Heart left ventricle (tissue), 16 donors: ENCODE measurements at regions of chr19 and their contacts with region 1.

Region 1: DNA sequence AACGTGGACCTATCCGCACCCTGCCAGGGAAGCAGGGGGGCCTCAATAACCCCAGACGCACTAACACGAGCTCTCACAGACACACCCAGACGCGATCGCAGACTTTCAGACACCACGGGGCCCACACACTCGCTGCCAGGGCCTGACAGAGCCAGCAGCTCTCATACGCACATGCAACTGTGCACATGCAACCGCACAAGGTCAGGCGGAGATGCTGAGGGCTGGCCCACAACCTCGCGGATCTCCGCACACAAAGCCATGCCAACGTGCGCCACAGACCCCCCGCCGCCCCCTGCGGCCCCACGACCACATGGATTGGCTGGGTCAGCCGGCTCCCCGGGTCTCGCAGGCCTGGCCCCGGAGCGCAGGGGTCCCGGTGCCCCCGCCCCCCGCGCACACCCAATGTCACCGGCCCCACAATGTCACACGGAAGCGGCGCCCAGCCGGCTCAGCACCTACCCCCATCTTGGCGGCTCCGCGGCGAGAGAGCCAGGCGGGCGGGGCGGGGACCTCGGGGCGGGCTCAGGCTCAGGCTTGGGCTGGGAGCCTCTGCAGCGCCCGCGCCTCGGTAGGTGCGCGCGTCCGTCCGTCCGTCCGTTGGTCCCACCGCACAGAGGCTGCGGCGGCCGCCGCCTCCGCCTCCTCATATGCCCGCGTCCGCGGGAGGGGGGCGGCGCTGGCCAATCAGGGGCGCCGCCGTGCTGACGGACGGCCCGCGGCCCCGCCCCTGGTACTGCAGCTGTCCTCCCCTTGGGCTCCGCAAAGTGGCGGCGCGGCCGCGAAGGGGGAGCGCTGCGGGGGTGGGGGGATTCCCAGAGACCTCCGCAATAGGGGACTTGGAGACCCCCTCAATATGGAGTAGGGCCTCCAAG is at the start of gene ATP1A3:
- DNase-seq: peak; percentile 63 to 83 (median 73)
- ATAC-seq: peak; percentile 57 to 76 (median 66)
- H3K4me3 ChIP-seq: peak within 1 kb of the TSS; percentile 52 to 96 (median 65)
- H3K27ac ChIP-seq: peak within 1 kb of the TSS; percentile 63 to 100 (median 94)
- H3K4me1 ChIP-seq: peaks cover 0 to 40% (median 5%) of the 10 kb centered on the region in 12 donors
- H3K27me3 ChIP-seq: peaks cover 7 to 60% (median 29%) of the 10 kb centered on the region in 9 donors
- CTCF ChIP-seq: no peak
- POLR2A ChIP-seq: peak; percentile 65 to 69
- total RNA-seq, gene ATP1A3: 165 to 414 (median 231) TPM

Region 2: GRCh38 chr19:42032431-42032830 is 38.6 kb after region 1 on chr19:
- intact Hi-C with region 1: loop called in 8 of 10 experiments (anchors 2 to 5 kb)
- DNase-seq: peak in 2 of 5 donors; percentile 0 to 15
- ATAC-seq: no peak
- H3K4me3 ChIP-seq: no peak overlapping the region
- H3K27ac ChIP-seq: no peak overlapping the region
- H3K4me1 ChIP-seq: peaks cover 0 to 9% (median under 1%) of the 10 kb centered on the region in 12 donors
- H3K27me3 ChIP-seq: peaks cover 0 to 11% (median 0%) of the 10 kb centered on the region in 9 donors
- CTCF ChIP-seq: no peak
- POLR2A ChIP-seq: no peak

Region 3: DNA sequence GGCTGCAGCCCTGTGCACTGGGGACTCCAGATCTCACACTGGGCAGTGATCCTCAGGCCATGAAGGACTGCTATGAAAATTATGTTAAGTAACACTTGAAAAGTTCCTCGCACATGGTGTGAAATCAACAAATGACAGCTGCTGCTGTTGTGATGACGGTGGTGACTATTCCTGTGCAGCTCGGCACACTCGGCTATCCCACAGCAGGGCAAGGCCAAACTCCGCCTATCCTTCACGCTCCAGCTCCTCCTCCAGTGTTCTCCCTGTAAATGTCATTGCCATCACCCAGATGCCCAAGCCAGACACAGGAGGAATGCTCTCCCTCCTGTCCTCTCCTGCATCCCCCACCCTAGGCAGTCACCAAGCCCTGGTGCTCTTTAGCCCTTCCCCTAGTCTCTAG is 44.8 kb after region 1 on chr19:
- intact Hi-C with region 1: loop called in 8 of 10 experiments (anchors 2 to 5 kb)
- DNase-seq: peak in 4 of 5 donors; percentile 74 to 91 (median 82)
- ATAC-seq: peak; percentile 91 to 95 (median 94)
- H3K4me3 ChIP-seq: no peak overlapping the region
- H3K27ac ChIP-seq: peak overlapping the region in 11 of 12 donors; percentile 24 to 94 (median 72)
- H3K4me1 ChIP-seq: peaks cover 0 to 41% (median 10%) of the 10 kb centered on the region in 12 donors
- H3K27me3 ChIP-seq: no peaks in the 10 kb centered on the region
- CTCF ChIP-seq: no peak
- POLR2A ChIP-seq: peak in 1 of 2 donors; percentile 40

Region 4: GRCh38 chr19:42075616-42076379 is 82.0 kb after region 1 on chr19 and contains the start of gene ZNF574:
- intact Hi-C with region 1: loop called in 2 of 10 experiments (anchors 5 kb)
- DNase-seq: peak; percentile 98 to 99 (median 99)
- ATAC-seq: peak; percentile 98 to 100 (median 99)
- H3K4me3 ChIP-seq: peak within 1 kb of the TSS; percentile 62 to 96 (median 86)
- H3K27ac ChIP-seq: peak within 1 kb of the TSS; percentile 89 to 99 (median 94)
- H3K4me1 ChIP-seq: peaks cover 0 to 26% (median 17%) of the 10 kb centered on the region in 12 donors
- H3K27me3 ChIP-seq: no peaks in the 10 kb centered on the region
- CTCF ChIP-seq: no peak
- POLR2A ChIP-seq: peak in 1 of 2 donors; percentile 74
- total RNA-seq, gene ZNF574: 6.3 to 17.7 (median 8.8) TPM